Activated naive CD4-positive, alpha-beta T cell treated with anti-CD3 and anti-CD28 coated beads for 36 hours (primary cell): ENCODE measurements at regions of chr4 and their contacts with region 1.

Region 1: GRCh38 chr4:7042697-7043464 is at the start of gene TADA2B:
- DNase-seq: peak; percentile 91
- H3K4me3 Mint-ChIP-seq: peak within 1 kb of the TSS; percentile 89
- H3K27ac Mint-ChIP-seq: peak within 1 kb of the TSS; percentile 46
- H3K4me1 Mint-ChIP-seq: peaks cover 43% of the 10 kb centered on the region
- H3K27me3 Mint-ChIP-seq: no peaks in the 10 kb centered on the region
- total RNA-seq, gene TADA2B: 8.2 to 9.9 TPM

Region 2: GRCh38 chr4:6716018-6716911 is 326.6 kb before region 1 on chr4 and contains the start of gene BLOC1S4:
- CTCF ChIA-PET with region 1: interaction called, 7 read pairs
- intact Hi-C with region 1: loop called (anchors 2 kb)
- DNase-seq: peak; percentile 88
- H3K4me3 Mint-ChIP-seq: peak within 1 kb of the TSS; percentile 96
- H3K27ac Mint-ChIP-seq: peak within 1 kb of the TSS; percentile 95
- H3K4me1 Mint-ChIP-seq: peaks cover 26% of the 10 kb centered on the region
- H3K27me3 Mint-ChIP-seq: no peaks in the 10 kb centered on the region
- total RNA-seq, gene BLOC1S4: 11.0 to 11.8 TPM

Region 3: GRCh38 chr4:6909073-6909965 is 133.6 kb before region 1 on chr4 and contains the start of gene TBC1D14:
- CTCF ChIA-PET with region 1: interaction called, 5 read pairs
- intact Hi-C with region 1: loop called (anchors 1 kb)
- DNase-seq: peak; percentile 88
- H3K4me3 Mint-ChIP-seq: peak within 1 kb of the TSS; percentile 92
- H3K27ac Mint-ChIP-seq: peak within 1 kb of the TSS; percentile 86
- H3K4me1 Mint-ChIP-seq: peaks cover 45% of the 10 kb centered on the region
- H3K27me3 Mint-ChIP-seq: peaks cover 3% of the 10 kb centered on the region
- total RNA-seq, gene TBC1D14: 23.6 to 24.6 TPM

Region 4: GRCh38 chr4:6999172-7000055 is 43.5 kb before region 1 on chr4:
- CTCF ChIA-PET with region 1: interaction called, 5 read pairs
- intact Hi-C with region 1: loop called (anchors 2 kb)
- DNase-seq: peak; percentile 69
- H3K4me3 Mint-ChIP-seq: peak overlapping the region; percentile 7
- H3K27ac Mint-ChIP-seq: peak overlapping the region; percentile 77
- H3K4me1 Mint-ChIP-seq: peaks cover 12% of the 10 kb centered on the region
- H3K27me3 Mint-ChIP-seq: no peaks in the 10 kb centered on the region

Region 5: GRCh38 chr4:7009564-7009963 is 33.3 kb before region 1 on chr4:
- CTCF ChIA-PET with region 1: no interaction called
- intact Hi-C with region 1: no loop called
- DNase-seq: no peak
- H3K4me3 Mint-ChIP-seq: no peak overlapping the region
- H3K27ac Mint-ChIP-seq: no peak overlapping the region
- H3K4me1 Mint-ChIP-seq: peaks cover 2% of the 10 kb centered on the region
- H3K27me3 Mint-ChIP-seq: no peaks in the 10 kb centered on the region

Region 6: DNA sequence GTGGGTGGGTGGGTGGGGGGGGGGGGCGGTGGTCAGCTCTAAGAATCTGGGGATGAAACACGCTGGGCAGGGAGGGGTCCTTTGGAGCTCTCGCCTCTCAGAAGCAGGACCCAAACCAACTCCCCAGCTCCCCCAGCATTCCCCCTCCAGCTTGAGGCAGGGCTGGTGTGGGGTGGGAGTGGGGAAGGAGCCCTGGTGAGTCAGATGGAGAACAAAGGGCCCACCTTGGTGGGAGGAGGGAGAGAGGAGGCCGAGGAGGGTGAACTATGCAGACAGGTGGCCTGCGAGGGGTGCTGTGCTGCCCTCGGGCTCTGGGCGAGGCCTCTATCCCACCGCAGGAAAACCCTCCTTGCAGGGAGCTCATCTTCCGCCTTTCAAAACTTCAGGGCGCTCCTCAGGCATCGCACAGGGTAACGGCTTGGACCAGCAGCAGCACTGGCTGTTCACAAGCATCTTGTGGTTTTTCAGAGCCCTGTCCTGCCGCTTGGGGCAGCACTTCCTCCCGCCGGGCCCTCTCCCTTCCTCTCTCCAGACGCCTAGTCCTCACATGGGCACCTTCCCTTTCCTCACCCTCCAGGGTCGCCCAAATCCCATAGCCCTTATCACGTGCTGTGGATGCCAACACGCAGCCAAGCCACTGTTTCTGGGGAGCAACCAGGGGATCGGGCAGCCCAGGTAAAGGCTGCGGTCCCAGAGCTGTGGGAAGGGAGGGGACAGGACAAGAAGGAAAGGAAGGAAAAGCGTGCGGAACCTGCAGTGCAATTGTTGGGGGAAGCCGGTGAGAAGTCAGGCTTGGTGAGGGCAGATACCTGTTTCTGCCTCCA is 59.0 kb after region 1 on chr4:
- CTCF ChIA-PET with region 1: interaction called, 12 read pairs
- intact Hi-C with region 1: loop called (anchors 2 kb)
- DNase-seq: peak; percentile 79
- H3K4me3 Mint-ChIP-seq: peak overlapping the region; percentile 90
- H3K27ac Mint-ChIP-seq: no peak overlapping the region
- H3K4me1 Mint-ChIP-seq: peaks cover 8% of the 10 kb centered on the region
- H3K27me3 Mint-ChIP-seq: no peaks in the 10 kb centered on the region